PC-3 (cell line): ENCODE measurements at regions of chr5 and their contacts with region 1.

Region 1: DNA sequence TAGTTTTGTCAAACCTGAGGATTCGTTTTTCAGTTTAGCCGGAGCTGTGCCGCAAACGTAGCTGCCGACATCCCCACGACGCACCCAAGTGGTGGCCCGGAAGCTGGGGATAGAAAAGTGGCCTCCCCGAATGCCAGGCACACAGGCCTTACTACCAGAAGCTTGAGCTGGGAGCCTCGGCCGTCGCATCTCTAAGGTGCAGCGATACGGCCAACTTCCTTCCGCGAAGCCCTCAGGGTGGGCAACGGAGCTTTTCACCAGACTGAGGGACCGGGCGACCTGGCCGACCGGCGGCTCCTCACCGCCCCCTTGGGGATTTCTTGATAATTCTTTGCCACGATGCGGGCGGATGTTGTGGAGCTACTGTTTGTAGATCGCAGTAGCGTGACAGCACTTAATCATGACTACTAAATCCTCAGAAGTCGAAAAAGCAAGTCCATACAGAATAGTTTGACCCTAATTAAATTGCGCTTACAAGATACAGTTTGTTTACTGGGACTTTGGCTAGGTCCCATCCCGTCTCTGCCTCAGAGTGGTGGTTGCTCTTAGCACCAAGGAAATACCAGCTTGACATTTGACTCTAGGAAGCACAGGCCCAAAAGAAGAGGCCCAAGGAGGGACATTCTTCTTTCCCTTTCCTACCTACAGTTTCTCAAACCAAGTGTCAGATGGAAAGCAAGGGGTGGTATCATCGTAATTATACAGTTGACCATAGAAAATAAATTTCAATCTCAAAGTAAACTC is 613 bp upstream of the TMEM267 start:
- DNase-seq: peak; percentile 93
- ATAC-seq: peak; percentile 72
- H3K4me3 ChIP-seq: peak overlapping the region; percentile 78
- H3K27ac ChIP-seq: peak overlapping the region; percentile 69
- H3K4me1 ChIP-seq: peaks cover 15% of the 10 kb centered on the region
- H3K27me3 ChIP-seq: no peaks in the 10 kb centered on the region
- CTCF ChIP-seq: peak; percentile 95

Region 2: DNA sequence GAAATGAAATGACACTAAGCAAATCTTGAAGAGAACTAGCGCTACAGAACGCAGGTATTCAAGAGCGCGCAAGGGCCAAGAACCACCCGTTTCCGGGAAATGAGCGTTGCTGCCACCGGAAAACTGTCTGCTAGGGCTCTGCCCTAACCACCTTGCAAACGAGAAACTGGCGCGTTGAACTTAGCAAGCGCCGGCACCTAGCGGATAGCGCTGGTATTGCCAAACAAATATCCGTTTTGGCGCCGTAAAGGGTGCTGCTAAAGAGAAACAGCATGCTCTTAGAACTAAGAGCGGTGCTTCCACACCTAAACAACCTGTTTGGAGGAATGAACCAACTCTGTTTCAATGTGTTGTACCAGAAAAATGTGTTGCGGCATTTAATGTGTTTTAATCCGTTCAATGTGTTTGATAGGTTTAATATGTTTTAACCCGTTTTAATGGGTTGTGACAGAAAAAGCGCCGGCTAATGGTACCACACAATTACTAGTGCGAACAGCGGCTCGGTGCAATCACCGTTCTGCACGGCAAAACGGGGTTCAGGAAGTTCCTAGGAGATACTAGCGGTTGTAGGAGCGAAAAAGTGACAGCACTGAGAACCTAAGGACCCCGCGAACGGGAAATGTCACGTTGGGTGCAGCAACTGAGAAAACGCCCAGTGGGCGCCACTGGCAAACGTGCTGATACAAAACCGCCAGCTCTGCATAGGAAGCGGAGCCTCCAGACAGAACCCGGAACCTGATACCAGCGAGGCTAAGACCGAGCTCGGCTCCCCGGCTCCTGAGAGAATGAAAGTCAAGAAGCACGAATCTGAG is 443.8 kb before region 1 on chr5 and contains the start of gene ANXA2R:
- CTCF ChIA-PET with region 1: no interaction called
- POLR2A ChIA-PET with region 1: interaction called, 3 read pairs
- intact Hi-C with region 1: loop called (anchors 5 kb)
- DNase-seq: peak; percentile 100
- ATAC-seq: peak; percentile 36
- H3K4me3 ChIP-seq: peak within 1 kb of the TSS; percentile 70
- H3K27ac ChIP-seq: peak within 1 kb of the TSS; percentile 90
- H3K4me1 ChIP-seq: peaks cover 20% of the 10 kb centered on the region
- H3K27me3 ChIP-seq: no peaks in the 10 kb centered on the region
- CTCF ChIP-seq: peak; percentile 89
- total RNA-seq, gene ANXA2R: 4.8 and 8.9 TPM in 2 replicates

Region 3: DNA sequence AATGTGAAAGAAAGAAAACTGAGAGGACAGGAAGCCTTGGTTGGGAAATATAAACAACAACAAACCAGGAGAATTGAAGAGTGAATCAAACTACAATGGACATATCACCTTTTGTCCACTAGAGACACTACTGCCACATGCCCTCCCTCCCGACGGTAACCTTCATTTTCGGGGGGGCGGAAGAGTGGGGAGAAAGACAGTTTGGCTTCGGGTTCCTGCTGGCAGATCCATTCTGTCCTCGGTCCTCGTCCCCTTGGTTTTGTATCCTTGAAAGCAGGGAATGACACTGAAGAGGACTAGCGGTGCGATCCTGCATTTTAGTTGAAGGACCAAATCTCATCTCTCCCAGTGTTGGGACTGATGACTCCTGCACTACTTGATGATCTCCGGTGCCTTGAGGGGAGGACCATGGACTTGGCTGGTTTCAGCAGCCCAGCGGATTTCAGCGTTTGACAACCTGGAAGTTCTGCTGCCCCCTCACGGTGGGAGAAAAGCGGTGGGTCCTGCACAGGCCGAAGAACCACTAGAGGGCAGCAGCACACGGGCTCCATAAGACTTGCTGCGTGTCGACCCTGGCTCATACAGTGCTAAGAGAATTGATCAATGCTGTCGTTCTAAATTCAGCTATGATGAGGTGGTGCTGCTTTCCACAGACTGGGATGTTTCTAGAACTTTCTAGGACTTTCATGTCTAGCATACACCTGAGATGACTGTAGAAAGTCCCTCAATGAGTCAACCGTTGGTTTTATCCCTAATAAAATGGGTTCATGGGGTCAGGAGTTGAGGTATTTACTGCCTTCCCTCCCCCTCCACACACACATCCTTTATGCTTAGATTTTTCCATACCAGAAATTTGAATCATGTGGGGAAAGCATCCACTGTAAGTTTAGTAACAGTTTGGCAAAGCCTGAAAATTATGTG is 378.6 kb before region 1 on chr5:
- CTCF ChIA-PET with region 1: no interaction called
- POLR2A ChIA-PET with region 1: no interaction called
- intact Hi-C with region 1: loop called (anchors 5 kb)
- DNase-seq: peak; percentile 98
- ATAC-seq: peak; percentile 93
- H3K4me3 ChIP-seq: peak overlapping the region; percentile 67
- H3K27ac ChIP-seq: peak overlapping the region; percentile 31
- H3K4me1 ChIP-seq: peaks cover 12% of the 10 kb centered on the region
- H3K27me3 ChIP-seq: no peaks in the 10 kb centered on the region
- CTCF ChIP-seq: peak; percentile 100

Region 4: DNA sequence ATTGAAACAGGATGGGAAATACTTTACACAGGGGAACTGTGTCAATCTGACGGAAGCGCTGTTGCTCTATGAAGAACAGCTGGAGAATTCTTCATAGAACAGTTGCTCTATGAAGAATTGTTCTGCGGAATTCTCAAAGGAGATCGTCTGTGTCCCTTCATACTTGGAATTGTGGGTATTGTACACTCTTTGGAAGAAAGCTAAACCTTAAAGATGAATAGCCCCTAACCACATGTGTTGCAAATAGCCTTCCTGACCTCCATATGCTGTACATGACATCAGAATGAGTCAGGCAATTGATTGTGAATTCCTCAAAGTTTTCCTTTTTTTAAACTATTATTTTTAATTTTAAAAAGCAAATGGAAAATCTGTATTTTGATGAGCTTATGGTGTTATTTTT is 276.7 kb before region 1 on chr5:
- CTCF ChIA-PET with region 1: no interaction called
- POLR2A ChIA-PET with region 1: no interaction called
- intact Hi-C with region 1: loop called (anchors 10 kb)
- DNase-seq: peak; percentile 66
- ATAC-seq: no peak
- H3K4me3 ChIP-seq: no peak overlapping the region
- H3K27ac ChIP-seq: no peak overlapping the region
- H3K4me1 ChIP-seq: peaks cover 27% of the 10 kb centered on the region
- H3K27me3 ChIP-seq: no peaks in the 10 kb centered on the region
- CTCF ChIP-seq: no peak

Region 5: DNA sequence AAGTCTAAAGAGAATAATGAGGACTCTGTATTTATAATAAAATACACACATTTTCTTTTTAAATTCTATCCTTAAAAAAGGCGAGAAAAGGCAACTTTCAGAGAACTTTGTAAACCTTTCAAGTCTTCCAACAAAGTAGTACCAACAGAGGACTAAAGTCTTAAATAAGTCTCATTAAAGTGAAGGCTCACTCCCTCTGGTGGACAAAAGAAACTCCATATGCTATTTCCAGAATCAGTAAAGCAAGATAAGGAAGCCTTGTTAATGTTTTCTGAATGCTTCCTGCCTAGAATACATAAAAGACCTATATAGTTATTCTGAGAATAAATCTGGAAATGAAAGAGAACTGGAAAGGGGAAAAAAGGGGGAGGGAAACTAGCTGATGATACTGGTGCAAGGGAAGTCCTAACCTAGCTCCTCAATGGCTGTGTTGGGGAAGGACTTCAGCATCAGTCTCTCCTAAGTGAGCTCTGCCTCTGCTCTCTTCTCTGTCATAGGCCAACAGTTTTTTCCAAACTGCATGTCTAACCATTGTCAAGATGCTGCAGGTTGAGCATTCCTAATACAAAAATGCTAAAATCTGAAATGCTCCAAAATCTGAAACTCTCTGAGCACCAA is 178.2 kb before region 1 on chr5:
- CTCF ChIA-PET with region 1: no interaction called
- POLR2A ChIA-PET with region 1: no interaction called
- intact Hi-C with region 1: loop called (anchors 1 kb)
- DNase-seq: peak; percentile 88
- ATAC-seq: peak; percentile 84
- H3K4me3 ChIP-seq: no peak overlapping the region
- H3K27ac ChIP-seq: no peak overlapping the region
- H3K4me1 ChIP-seq: peaks cover 18% of the 10 kb centered on the region
- H3K27me3 ChIP-seq: no peaks in the 10 kb centered on the region
- CTCF ChIP-seq: peak; percentile 93

Region 6: GRCh38 chr5:43396762-43397304 is 87.4 kb before region 1 on chr5:
- CTCF ChIA-PET with region 1: interaction called, 5 read pairs
- POLR2A ChIA-PET with region 1: interaction called, 3 read pairs
- intact Hi-C with region 1: loop called (anchors 1 kb)
- DNase-seq: peak; percentile 78
- ATAC-seq: peak; percentile 93
- H3K4me3 ChIP-seq: peak overlapping the region; percentile 71
- H3K27ac ChIP-seq: peak overlapping the region; percentile 31
- H3K4me1 ChIP-seq: peaks cover 15% of the 10 kb centered on the region
- H3K27me3 ChIP-seq: no peaks in the 10 kb centered on the region
- CTCF ChIP-seq: no peak

Region 7: DNA sequence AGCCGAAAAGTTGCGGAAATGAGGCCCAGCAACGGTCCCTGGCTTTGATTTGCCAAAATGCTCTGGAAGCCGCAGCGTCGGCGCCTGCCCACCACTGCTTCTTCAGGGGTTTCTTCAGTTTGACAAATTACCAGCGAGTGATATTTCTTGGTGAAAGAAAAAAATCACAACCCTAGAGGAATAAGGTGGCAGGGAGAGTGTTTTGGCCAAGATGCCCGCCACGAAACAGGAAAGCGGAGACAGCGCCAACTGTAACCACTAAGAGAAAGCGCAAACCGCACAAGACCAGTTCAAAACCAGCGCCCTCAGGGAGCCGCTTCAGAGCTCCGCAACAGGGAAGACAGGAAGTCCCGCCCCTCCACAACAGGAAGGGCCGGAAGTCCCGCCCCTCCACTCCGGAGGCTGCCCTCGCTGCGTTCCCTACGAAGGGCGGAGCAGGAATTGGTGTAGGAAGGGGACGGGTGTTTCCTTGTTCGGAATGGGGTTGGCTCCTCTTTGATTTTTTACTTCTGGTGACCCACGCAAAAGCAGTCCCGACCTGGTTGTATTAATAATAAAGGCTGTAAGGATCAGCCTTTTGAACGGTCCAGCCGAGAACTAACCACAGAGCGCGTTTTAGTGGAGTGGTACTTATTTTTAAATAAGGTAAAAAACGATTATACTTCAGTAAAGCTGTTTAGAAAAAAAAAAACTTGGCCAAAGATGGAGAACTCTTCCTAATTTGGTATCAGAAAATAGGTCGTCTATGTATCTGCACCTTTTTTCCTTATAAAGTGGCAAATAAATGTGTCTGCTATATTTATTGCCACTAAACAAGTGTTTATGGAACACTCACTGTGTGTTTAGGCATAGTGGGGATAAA is 30.8 kb after region 1 on chr5 and contains the start of gene C5orf34:
- CTCF ChIA-PET with region 1: interaction called, 5 read pairs
- POLR2A ChIA-PET with region 1: interaction called, 17 read pairs
- intact Hi-C with region 1: loop called (anchors 1 kb)
- DNase-seq: peak; percentile 99
- ATAC-seq: peak; percentile 98
- H3K4me3 ChIP-seq: peak within 1 kb of the TSS; percentile 82
- H3K27ac ChIP-seq: peak within 1 kb of the TSS; percentile 66
- H3K4me1 ChIP-seq: peaks cover 18% of the 10 kb centered on the region
- H3K27me3 ChIP-seq: no peaks in the 10 kb centered on the region
- CTCF ChIP-seq: 0 out of 2 replicates have a peak, but pooled peaks have one; percentile 21
- total RNA-seq, gene C5orf34: 9.8 and 16.3 TPM in 2 replicates

Region 8: DNA sequence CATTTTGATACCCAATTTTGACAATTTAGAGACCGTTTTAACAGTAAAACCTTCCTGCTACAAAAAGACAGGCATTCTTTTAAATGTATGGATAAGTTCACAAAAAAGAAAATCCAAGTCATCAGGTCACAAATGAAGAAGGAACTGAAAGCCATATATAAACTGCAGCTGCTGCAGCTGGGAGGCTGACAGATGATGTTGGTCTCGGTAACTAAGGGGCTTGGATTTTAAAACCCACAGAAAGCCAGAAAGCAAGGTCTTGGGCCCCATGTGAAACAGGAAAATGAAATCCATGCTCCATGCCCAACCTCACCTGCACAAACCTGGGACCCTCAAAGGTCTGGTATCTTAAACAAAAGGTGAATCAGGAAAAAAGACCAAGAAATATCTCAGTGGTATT is 46.4 kb after region 1 on chr5:
- CTCF ChIA-PET with region 1: no interaction called
- POLR2A ChIA-PET with region 1: no interaction called
- intact Hi-C with region 1: no loop called
- DNase-seq: no peak
- ATAC-seq: no peak
- H3K4me3 ChIP-seq: no peak overlapping the region
- H3K27ac ChIP-seq: no peak overlapping the region
- H3K4me1 ChIP-seq: no peaks in the 10 kb centered on the region
- H3K27me3 ChIP-seq: no peaks in the 10 kb centered on the region
- CTCF ChIP-seq: no peak